A549 (cell line): ENCODE measurements at regions of chr17 and their contacts with region 1.

Region 1: GRCh38 chr17:77542551-77543490 is 402.1 kb downstream of the SEC14L1 start:
- DNase-seq: peak; percentile 88 to 91
- ATAC-seq: peak; percentile 95 to 97
- H3K4me3 ChIP-seq: no peak overlapping the region
- H3K27ac ChIP-seq: peak overlapping the region; percentile 10 to 48; a peak in 1 of 6 replicates
- H3K4me1 ChIP-seq: peaks cover 16% of the 10 kb centered on the region
- CTCF ChIP-seq: peak; percentile 97
- EP300 ChIP-seq: no peak
- POLR2A ChIP-seq: no peak
- RAD21 ChIP-seq: peak; percentile 99 to 100

Region 2: GRCh38 chr17:77555741-77556291 is 13.0 kb after region 1 on chr17:
- CTCF ChIA-PET with region 1: interaction called, 52 read pairs
- POLR2A ChIA-PET with region 1: no interaction called
- DNase-seq: peak in 1 of 2 experiments; percentile 34
- ATAC-seq: peak in 1 of 2 experiments; percentile 24; a peak in 3 of 6 replicates
- H3K4me3 ChIP-seq: no peak overlapping the region
- H3K27ac ChIP-seq: no peak overlapping the region
- H3K4me1 ChIP-seq: 0 out of 3 replicates have a peak, but pooled peaks cover 3% of the 10 kb centered on the region
- CTCF ChIP-seq: no peak
- EP300 ChIP-seq: no peak
- POLR2A ChIP-seq: no peak
- RAD21 ChIP-seq: no peak

Region 3: GRCh38 chr17:77609553-77610517 is 67.0 kb after region 1 on chr17:
- CTCF ChIA-PET with region 1: interaction called, 10 read pairs
- POLR2A ChIA-PET with region 1: no interaction called
- DNase-seq: no peak
- ATAC-seq: no peak
- H3K4me3 ChIP-seq: no peak overlapping the region
- H3K27ac ChIP-seq: peak overlapping the region in 1 of 2 experiments; percentile 11; a peak in 1 of 6 replicates
- H3K4me1 ChIP-seq: peaks cover 3% of the 10 kb centered on the region
- CTCF ChIP-seq: no peak
- EP300 ChIP-seq: no peak
- POLR2A ChIP-seq: no peak
- RAD21 ChIP-seq: no peak

Region 4: GRCh38 chr17:77649717-77650211 is 106.9 kb after region 1 on chr17:
- CTCF ChIA-PET with region 1: interaction called, 16 read pairs
- POLR2A ChIA-PET with region 1: no interaction called
- DNase-seq: peak; percentile 39 to 41
- ATAC-seq: peak; percentile 25 to 76; a peak in 4 of 6 replicates
- H3K4me3 ChIP-seq: no peak overlapping the region
- H3K27ac ChIP-seq: no peak overlapping the region
- H3K4me1 ChIP-seq: no peaks in the 10 kb centered on the region; the same call in 2 of the 3 replicates
- CTCF ChIP-seq: peak; percentile 22; the same call in 1 of the 3 replicates
- EP300 ChIP-seq: no peak
- POLR2A ChIP-seq: no peak
- RAD21 ChIP-seq: peak; percentile 53 to 70

Region 5: DNA sequence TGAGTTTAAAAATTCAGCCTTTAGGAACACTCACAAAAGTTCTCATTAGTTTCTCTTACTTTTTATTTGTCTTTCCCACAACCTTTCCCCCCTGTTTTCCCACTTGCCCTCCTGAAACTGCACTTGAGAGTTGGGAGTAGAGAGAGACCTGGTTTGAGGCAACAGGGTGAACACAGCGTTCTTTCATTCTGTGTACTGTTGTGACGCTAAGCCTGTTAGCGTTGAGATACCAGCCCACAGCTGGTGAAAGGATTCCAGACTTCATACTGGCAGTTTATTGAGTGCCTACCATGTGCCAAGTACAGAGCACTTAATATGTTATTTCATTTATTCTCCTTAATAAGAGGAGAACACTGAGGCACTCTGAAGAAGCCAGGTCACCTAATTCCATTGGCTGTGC is 426.0 kb after region 1 on chr17:
- CTCF ChIA-PET with region 1: interaction called, 12 read pairs
- POLR2A ChIA-PET with region 1: no interaction called
- DNase-seq: no peak
- ATAC-seq: no peak
- H3K4me3 ChIP-seq: no peak overlapping the region
- H3K27ac ChIP-seq: no peak overlapping the region
- H3K4me1 ChIP-seq: no peaks in the 10 kb centered on the region
- CTCF ChIP-seq: no peak
- EP300 ChIP-seq: no peak
- POLR2A ChIP-seq: no peak
- RAD21 ChIP-seq: no peak

Region 6: DNA sequence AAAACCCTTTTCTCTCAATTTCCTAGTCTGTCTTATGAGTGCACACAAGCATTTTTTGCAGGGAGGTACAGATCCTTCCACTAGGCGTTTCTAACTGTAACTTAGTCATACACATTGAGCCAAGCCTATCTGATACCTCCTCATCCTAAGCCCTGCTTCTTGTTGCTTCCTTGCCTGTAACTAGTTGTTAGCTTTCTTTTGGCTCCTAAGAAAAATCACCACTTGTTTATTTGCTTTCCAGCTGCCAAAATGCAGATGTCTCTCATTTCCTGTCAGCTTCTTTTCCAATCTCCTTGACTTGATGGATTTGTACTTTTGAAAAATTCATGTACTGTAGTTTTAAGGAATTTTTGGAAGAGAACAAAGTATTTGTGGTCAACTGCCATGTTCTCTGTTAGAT is 489.3 kb after region 1 on chr17:
- CTCF ChIA-PET with region 1: interaction called, 15 read pairs
- POLR2A ChIA-PET with region 1: no interaction called
- DNase-seq: no peak
- ATAC-seq: peak in 1 of 2 experiments; percentile 52; a peak in 1 of 6 replicates
- H3K4me3 ChIP-seq: no peak overlapping the region
- H3K27ac ChIP-seq: no peak overlapping the region
- H3K4me1 ChIP-seq: peaks cover 16% of the 10 kb centered on the region
- CTCF ChIP-seq: no peak
- EP300 ChIP-seq: no peak
- POLR2A ChIP-seq: no peak
- RAD21 ChIP-seq: no peak